ENCODE measurements at regions of chr17 and their contacts with region 1.

Region 1: GRCh38 chr17:53253956-53254597 is 568.6 kb upstream of the KIF2B start:
- DNase-seq: no peak
- ATAC-seq: no peak
- H3K4me3 ChIP-seq: no peak overlapping the region
- H3K27ac ChIP-seq: no peak overlapping the region
- H3K4me1 ChIP-seq: no peaks in the 10 kb centered on the region
- H3K27me3 ChIP-seq: no peaks in the 10 kb centered on the region
- CTCF ChIP-seq: no peak

Region 2: DNA sequence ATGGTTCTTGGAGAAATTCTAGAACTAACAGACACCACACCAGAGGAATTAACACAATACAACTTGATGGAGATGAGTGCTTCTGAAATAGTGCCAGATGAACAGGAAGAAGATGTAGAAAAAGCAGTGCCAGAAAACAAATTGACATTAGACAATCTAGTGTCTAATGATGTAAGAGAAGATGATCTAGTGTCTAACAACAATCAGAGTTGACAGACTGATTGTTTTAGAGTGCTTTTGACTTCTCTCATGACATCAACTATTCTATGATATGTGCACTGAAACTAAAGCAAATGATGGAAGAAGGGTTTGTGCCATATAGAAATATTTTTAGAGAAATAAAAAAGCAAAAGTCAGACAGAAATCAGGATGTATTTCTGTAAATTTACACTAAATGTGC is 77.4 kb before region 1 on chr17:
- intact Hi-C with region 1: loop called in 1 of 10 experiments (anchors 10 kb)
- DNase-seq: no peak
- ATAC-seq: no peak
- H3K4me3 ChIP-seq: no peak overlapping the region
- H3K27ac ChIP-seq: no peak overlapping the region
- H3K4me1 ChIP-seq: no peaks in the 10 kb centered on the region
- H3K27me3 ChIP-seq: no peaks in the 10 kb centered on the region
- CTCF ChIP-seq: no peak

Region 3: GRCh38 chr17:53227514-53227913 is 26.6 kb before region 1 on chr17:
- intact Hi-C with region 1: no loop called
- DNase-seq: no peak
- ATAC-seq: no peak
- H3K4me3 ChIP-seq: no peak overlapping the region
- H3K27ac ChIP-seq: no peak overlapping the region
- H3K4me1 ChIP-seq: no peaks in the 10 kb centered on the region
- H3K27me3 ChIP-seq: no peaks in the 10 kb centered on the region
- CTCF ChIP-seq: no peak